ENCODE measurements at regions of chr4 and their contacts with region 1.

Region 1: GRCh38 chr4:159102622-159103383 is at the start of gene RAPGEF2:
- DNase-seq: peak; percentile 90
- ATAC-seq: peak; percentile 85
- H3K4me3 Mint-ChIP-seq: peak within 1 kb of the TSS; percentile 77
- H3K27ac Mint-ChIP-seq: peak within 1 kb of the TSS; percentile 75
- H3K4me1 Mint-ChIP-seq: peaks cover 50% of the 10 kb centered on the region
- H3K27me3 Mint-ChIP-seq: peaks cover 9% of the 10 kb centered on the region
- CTCF ChIP-seq: no peak
- total RNA-seq, gene RAPGEF2: 13.7 to 14.8 TPM

Region 2: GRCh38 chr4:158671915-158672806 is 430.6 kb before region 1 on chr4 and contains the start of gene ETFDH:
- CTCF ChIA-PET with region 1: no interaction called
- POLR2A ChIA-PET with region 1: interaction called, 3 read pairs
- intact Hi-C with region 1: loop called (anchors 5 kb)
- DNase-seq: peak; percentile 98
- ATAC-seq: peak; percentile 86
- H3K4me3 Mint-ChIP-seq: peak within 1 kb of the TSS; percentile 98
- H3K27ac Mint-ChIP-seq: peak within 1 kb of the TSS; percentile 98
- H3K4me1 Mint-ChIP-seq: peaks cover 31% of the 10 kb centered on the region
- H3K27me3 Mint-ChIP-seq: no peaks in the 10 kb centered on the region
- CTCF ChIP-seq: peak; percentile 32
- total RNA-seq, gene ETFDH: 28.8 to 31.6 TPM

Region 3: GRCh38 chr4:159175085-159175988 is 72.5 kb after region 1 on chr4:
- CTCF ChIA-PET with region 1: interaction called, 4 read pairs
- POLR2A ChIA-PET with region 1: no interaction called
- intact Hi-C with region 1: loop called (anchors 5 kb)
- DNase-seq: peak; percentile 74
- ATAC-seq: peak; percentile 94
- H3K4me3 Mint-ChIP-seq: peak overlapping the region; percentile 49
- H3K27ac Mint-ChIP-seq: no peak overlapping the region
- H3K4me1 Mint-ChIP-seq: peaks cover 63% of the 10 kb centered on the region
- H3K27me3 Mint-ChIP-seq: no peaks in the 10 kb centered on the region
- CTCF ChIP-seq: peak; percentile 82

Measured in activated CD8-positive, alpha-beta T cell treated with anti-CD3 and anti-CD28 coated beads for 36 hours (primary cell).